Activated CD4-positive, alpha-beta memory T cell treated with anti-CD3 and anti-CD28 coated beads for 36 hours (primary cell): ENCODE measurements at regions of chr7 and their contacts with region 1.

Region 1: DNA sequence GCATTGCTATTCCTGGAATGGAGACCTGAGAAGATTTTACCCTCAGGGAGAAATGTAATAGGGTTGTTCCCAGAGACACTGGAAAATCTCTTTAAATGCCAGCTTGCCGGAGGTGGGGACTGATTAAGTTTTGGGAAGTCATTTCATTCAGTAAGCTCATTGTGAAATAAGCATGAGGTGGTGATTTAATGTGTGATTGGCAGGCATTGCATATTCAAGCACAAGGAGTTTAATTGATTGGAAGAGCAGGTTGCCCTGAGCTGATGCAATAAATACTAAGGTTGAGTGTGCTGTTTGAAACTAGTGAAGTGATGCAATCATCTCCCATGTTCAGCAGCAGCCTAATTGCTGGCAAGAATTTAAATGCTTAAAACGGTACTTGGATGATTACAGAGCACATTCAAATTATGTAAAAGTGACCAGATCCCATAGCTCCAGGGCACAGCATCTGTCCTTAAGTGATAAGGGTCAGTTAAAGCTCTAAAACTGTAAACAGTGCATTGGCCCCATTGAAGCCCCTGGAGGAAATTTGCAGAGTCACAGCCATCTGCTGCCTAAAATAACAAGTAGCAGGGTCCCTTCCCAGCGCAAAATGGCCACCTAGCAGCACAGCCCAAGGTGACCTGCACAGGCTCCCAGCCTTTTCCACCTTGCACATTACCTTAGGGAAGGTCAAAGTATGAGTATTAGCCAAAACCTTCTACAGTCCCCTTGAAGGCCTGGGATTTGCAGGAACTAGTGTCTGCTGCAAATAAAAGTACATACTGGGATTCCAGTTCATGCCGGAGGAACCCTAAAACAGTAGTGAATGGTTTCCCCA is 92.1 kb downstream of the CCDC71L start:
- DNase-seq: no peak
- H3K4me3 Mint-ChIP-seq: no peak overlapping the region
- H3K27ac Mint-ChIP-seq: peak overlapping the region; percentile 79
- H3K4me1 Mint-ChIP-seq: peaks cover 14% of the 10 kb centered on the region
- H3K27me3 Mint-ChIP-seq: peaks cover 11% of the 10 kb centered on the region

Region 2: DNA sequence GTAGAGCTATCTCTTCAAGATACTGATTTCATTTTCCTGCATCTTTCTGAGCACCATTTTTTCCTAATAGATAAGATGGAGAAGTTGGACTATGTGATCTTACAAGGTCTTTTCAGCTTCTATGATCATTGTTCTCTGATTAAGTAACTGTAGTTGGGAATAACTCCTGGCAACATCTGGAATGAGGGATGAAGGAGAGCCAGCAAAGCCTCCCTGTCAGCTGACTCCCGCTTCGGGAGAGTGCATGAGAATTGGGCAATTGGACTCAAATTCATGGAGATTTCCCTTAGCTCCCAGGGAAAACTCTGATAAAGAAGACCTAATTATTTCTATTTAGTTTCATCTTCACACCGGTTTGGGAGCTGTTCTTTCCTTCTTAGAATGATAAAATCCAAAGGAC is 54.0 kb before region 1 on chr7:
- CTCF ChIA-PET with region 1: no interaction called
- POLR2A ChIA-PET with region 1: no interaction called
- intact Hi-C with region 1: no loop called
- DNase-seq: no peak
- H3K4me3 Mint-ChIP-seq: no peak overlapping the region
- H3K27ac Mint-ChIP-seq: no peak overlapping the region
- H3K4me1 Mint-ChIP-seq: peaks cover 6% of the 10 kb centered on the region
- H3K27me3 Mint-ChIP-seq: peaks cover 20% of the 10 kb centered on the region

Region 3: GRCh38 chr7:106598663-106599342 is 29.9 kb after region 1 on chr7:
- CTCF ChIA-PET with region 1: no interaction called
- POLR2A ChIA-PET with region 1: no interaction called
- intact Hi-C with region 1: loop called (anchors 2 kb)
- DNase-seq: peak; percentile 81
- H3K4me3 Mint-ChIP-seq: no peak overlapping the region
- H3K27ac Mint-ChIP-seq: no peak overlapping the region
- H3K4me1 Mint-ChIP-seq: peaks cover 4% of the 10 kb centered on the region
- H3K27me3 Mint-ChIP-seq: peaks cover 6% of the 10 kb centered on the region

Region 4: GRCh38 chr7:106779877-106780276 is 211.0 kb after region 1 on chr7:
- CTCF ChIA-PET with region 1: no interaction called
- POLR2A ChIA-PET with region 1: no interaction called
- intact Hi-C with region 1: loop called (anchors 10 kb)
- DNase-seq: peak; percentile 34
- H3K4me3 Mint-ChIP-seq: no peak overlapping the region
- H3K27ac Mint-ChIP-seq: no peak overlapping the region
- H3K4me1 Mint-ChIP-seq: peaks cover 12% of the 10 kb centered on the region
- H3K27me3 Mint-ChIP-seq: no peaks in the 10 kb centered on the region